ENCODE measurements at regions of chr12 and their contacts with region 1.

Region 1: DNA sequence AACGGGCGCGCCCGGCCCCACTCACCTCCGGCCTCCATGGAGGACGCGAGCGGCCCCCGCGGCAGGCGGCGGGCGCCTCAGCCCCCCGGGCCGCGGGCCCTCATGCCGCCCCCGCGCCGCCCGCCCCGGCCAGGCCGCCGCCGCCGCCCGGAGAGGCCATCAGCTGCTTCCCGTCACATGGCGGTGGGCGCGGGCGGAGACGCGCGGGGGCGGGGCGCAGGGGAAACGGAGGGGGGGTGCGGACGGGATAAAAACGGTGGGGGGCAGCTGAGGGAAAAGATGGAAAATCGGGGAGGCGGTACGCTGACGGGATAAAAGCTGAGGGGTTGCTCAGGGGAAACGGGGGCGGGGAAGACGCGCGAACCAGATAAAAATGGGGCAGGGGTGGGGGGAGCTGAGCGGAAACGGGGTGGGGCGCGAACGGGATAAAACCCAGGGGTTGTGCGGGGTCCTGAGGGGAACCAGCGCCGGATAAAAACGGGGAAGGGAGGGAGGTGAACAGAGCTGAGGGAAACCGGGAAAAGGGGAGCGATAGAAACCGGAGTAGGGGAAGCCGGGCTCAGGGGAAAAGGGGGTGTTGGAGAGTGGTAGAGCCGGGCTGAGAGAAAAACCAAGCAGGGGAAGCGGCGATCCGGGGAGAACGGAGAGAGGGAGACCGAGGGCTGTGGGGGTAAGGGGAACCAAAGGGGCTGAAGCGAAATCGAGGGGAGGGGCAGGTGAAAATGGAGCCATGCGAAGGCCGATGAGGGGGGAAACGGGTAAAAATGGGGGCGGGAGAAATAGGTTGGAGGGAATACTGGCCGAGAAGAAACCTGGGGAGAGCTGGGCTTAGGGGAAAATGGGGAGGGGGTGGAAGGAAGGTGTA is at the start of gene WSB2:
- DNase-seq: peak; percentile 61
- H3K4me3 Mint-ChIP-seq: peak within 1 kb of the TSS; percentile 89
- H3K27ac Mint-ChIP-seq: peak within 1 kb of the TSS; percentile 94
- H3K4me1 Mint-ChIP-seq: peaks cover 59% of the 10 kb centered on the region
- H3K27me3 Mint-ChIP-seq: no peaks in the 10 kb centered on the region
- total RNA-seq, gene WSB2: 44.3 to 46.4 TPM

Region 2: DNA sequence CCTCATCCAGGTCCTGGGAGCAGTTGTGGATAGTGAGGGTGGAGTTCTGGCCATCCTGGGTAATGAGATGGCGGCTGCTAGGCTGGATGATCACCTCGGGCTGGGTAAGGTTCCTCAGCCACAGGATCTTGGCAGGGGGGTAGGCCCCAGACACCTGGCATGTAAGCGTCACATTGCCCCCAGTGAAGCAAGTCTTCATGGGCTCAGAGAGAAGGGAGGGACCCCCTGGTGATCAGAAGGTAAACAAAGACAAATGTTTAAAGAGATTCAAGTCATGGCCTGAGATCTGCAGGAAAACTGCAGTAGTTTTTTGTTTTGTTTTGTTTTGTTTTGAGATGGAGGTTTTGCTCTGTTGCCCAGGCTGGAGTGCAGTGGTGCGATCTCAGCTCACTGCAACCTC is 12.5 kb after region 1 on chr12:
- CTCF ChIA-PET with region 1: interaction called, 20 read pairs
- POLR2A ChIA-PET with region 1: no interaction called
- DNase-seq: no peak
- H3K4me3 Mint-ChIP-seq: no peak overlapping the region
- H3K27ac Mint-ChIP-seq: no peak overlapping the region
- H3K4me1 Mint-ChIP-seq: no peaks in the 10 kb centered on the region
- H3K27me3 Mint-ChIP-seq: no peaks in the 10 kb centered on the region

Region 3: GRCh38 chr12:118089782-118090181 is 28.5 kb after region 1 on chr12:
- CTCF ChIA-PET with region 1: no interaction called
- POLR2A ChIA-PET with region 1: no interaction called
- DNase-seq: no peak
- H3K4me3 Mint-ChIP-seq: no peak overlapping the region
- H3K27ac Mint-ChIP-seq: no peak overlapping the region
- H3K4me1 Mint-ChIP-seq: no peaks in the 10 kb centered on the region
- H3K27me3 Mint-ChIP-seq: no peaks in the 10 kb centered on the region

Region 4: DNA sequence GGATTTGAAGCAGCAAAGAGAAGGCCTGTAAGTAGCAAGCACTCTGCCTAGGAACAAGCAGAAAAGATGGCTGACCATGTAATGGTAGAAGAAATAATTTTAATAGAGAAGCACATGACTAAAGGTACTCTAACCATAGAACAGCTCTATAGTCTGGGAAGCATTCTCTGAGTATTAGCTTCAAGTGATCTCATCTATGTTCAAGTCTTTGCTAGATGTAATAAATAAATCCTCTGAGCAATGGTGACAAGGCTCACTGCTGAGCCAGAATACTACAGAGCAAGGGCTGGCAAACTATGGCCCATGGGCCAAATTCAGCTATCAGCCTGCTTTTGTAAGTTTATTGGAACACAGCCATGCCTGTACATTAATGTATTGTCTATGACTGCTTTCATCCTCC is 159.5 kb after region 1 on chr12:
- CTCF ChIA-PET with region 1: no interaction called
- POLR2A ChIA-PET with region 1: no interaction called
- DNase-seq: no peak
- H3K4me3 Mint-ChIP-seq: no peak overlapping the region
- H3K27ac Mint-ChIP-seq: peak overlapping the region; percentile 15
- H3K4me1 Mint-ChIP-seq: no peaks in the 10 kb centered on the region
- H3K27me3 Mint-ChIP-seq: no peaks in the 10 kb centered on the region